ENCODE measurements at regions of chr15 and their contacts with region 1.

Region 1: GRCh38 chr15:76177491-76178040 is 117.8 kb downstream of the TMEM266 start:
- DNase-seq: no peak
- ATAC-seq: no peak
- H3K4me3 Mint-ChIP-seq: no peak overlapping the region
- H3K27ac Mint-ChIP-seq: no peak overlapping the region
- H3K4me1 Mint-ChIP-seq: peaks cover 10% of the 10 kb centered on the region
- H3K27me3 Mint-ChIP-seq: peaks cover 36% of the 10 kb centered on the region

Region 2: GRCh38 chr15:76150971-76151598 is 26.5 kb before region 1 on chr15:
- CTCF ChIA-PET with region 1: interaction called, 3 read pairs
- POLR2A ChIA-PET with region 1: no interaction called
- intact Hi-C with region 1: loop called in 1 of 2 experiments (anchors 1 kb)
- DNase-seq: peak; percentile 90
- ATAC-seq: peak; percentile 93
- H3K4me3 Mint-ChIP-seq: no peak overlapping the region
- H3K27ac Mint-ChIP-seq: no peak overlapping the region
- H3K4me1 Mint-ChIP-seq: peaks cover 22% of the 10 kb centered on the region
- H3K27me3 Mint-ChIP-seq: peaks cover 8% of the 10 kb centered on the region

Region 3: GRCh38 chr15:76235186-76235826 is 57.7 kb after region 1 on chr15:
- CTCF ChIA-PET with region 1: no interaction called
- POLR2A ChIA-PET with region 1: no interaction called
- intact Hi-C with region 1: loop called in 1 of 2 experiments (anchors 10 kb)
- DNase-seq: no peak
- ATAC-seq: peak; percentile 77
- H3K4me3 Mint-ChIP-seq: no peak overlapping the region
- H3K27ac Mint-ChIP-seq: no peak overlapping the region
- H3K4me1 Mint-ChIP-seq: no peaks in the 10 kb centered on the region
- H3K27me3 Mint-ChIP-seq: no peaks in the 10 kb centered on the region

Region 4: GRCh38 chr15:76336254-76337058 is 158.9 kb after region 1 on chr15 and contains the start of gene ISL2:
- CTCF ChIA-PET with region 1: no interaction called
- POLR2A ChIA-PET with region 1: no interaction called
- intact Hi-C with region 1: loop called in 1 of 2 experiments (anchors 5 kb)
- DNase-seq: peak; percentile 88
- ATAC-seq: peak; percentile 47
- H3K4me3 Mint-ChIP-seq: peak within 1 kb of the TSS; percentile 67
- H3K27ac Mint-ChIP-seq: peak within 1 kb of the TSS; percentile 59
- H3K4me1 Mint-ChIP-seq: peaks cover 45% of the 10 kb centered on the region
- H3K27me3 Mint-ChIP-seq: peaks cover 61% of the 10 kb centered on the region
- total RNA-seq, gene ISL2: 0.25 TPM in 1 of 2 experiments, not detected in the other